ENCODE measurements at regions of chr6 and their contacts with region 1.

Region 1: DNA sequence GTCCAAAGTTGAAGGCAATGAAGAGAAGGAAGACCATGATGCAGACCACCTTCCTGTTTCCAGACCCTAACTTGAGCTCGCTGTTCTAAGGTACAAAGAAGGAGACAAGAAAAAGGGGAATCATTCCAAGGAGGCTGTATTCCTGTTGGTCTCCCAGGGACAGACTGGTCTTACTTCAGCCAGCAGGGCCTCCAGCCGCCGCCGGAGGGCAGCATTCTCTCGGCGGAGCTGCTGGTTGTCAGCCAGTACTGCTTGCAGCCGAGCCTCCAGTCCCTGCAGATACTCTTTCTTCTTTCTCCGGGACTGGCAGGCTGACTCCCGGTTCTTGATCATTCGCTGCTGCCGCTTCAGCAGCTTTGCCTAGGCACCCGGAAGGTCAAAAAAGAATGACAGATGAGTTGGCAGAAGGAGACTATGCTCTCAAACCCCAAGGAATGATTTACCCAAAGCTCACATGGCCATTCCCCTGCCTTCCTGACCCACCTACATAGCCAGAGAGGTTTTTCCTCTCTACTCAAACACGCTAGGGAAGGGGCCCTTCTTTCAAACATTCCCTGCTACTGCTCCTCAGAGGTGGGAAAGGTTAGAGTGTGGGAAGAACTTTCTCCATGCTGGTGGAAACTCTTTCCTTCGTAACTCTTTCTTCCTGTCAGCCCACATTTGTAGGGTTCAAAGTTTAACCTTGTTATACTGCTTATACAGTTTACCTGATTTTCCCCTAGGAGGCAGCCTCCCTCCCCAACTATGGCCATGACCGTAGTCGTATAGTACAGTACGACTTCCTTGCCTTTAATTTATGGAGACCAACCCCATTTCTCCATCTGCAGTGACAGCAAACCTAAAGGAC is 9.0 kb downstream of the ATF6B start:
- DNase-seq: peak; percentile 44 to 83 (median 64)
- ATAC-seq: peak; percentile 82
- H3K4me3 ChIP-seq: no peak overlapping the region
- H3K4me3 Mint-ChIP-seq: no peak overlapping the region
- H3K27ac ChIP-seq: no peak overlapping the region
- H3K27ac Mint-ChIP-seq: no peak overlapping the region
- H3K4me1 ChIP-seq: peaks cover 10% of the 10 kb centered on the region
- H3K4me1 Mint-ChIP-seq: peaks cover 13% of the 10 kb centered on the region
- H3K27me3 ChIP-seq: no peaks in the 10 kb centered on the region
- H3K27me3 Mint-ChIP-seq: no peaks in the 10 kb centered on the region
- CTCF ChIP-seq: peak; percentile 81

Region 2: GRCh38 chr6:32153564-32154513 is 34.8 kb after region 1 on chr6 and contains the start of gene PPT2:
- CTCF ChIA-PET with region 1: interaction called, 9 read pairs
- POLR2A ChIA-PET with region 1: no interaction called
- intact Hi-C with region 1: loop called (anchors 1 to 2 kb)
- DNase-seq: peak; percentile 38 to 88 (median 64)
- ATAC-seq: peak; percentile 67
- H3K4me3 ChIP-seq: peak within 1 kb of the TSS; percentile 80
- H3K4me3 Mint-ChIP-seq: peak within 1 kb of the TSS; percentile 96
- H3K27ac ChIP-seq: peak within 1 kb of the TSS; percentile 51 to 67
- H3K27ac Mint-ChIP-seq: peak within 1 kb of the TSS; percentile 88
- H3K4me1 ChIP-seq: peaks cover 57% of the 10 kb centered on the region
- H3K4me1 Mint-ChIP-seq: peaks cover 65% of the 10 kb centered on the region
- H3K27me3 ChIP-seq: peaks cover 4 to 14% of the 10 kb centered on the region in 2 experiments
- H3K27me3 Mint-ChIP-seq: peaks cover 22% of the 10 kb centered on the region
- CTCF ChIP-seq: no peak
- total RNA-seq, gene PPT2: 8.7 to 8.9 TPM

Region 3: DNA sequence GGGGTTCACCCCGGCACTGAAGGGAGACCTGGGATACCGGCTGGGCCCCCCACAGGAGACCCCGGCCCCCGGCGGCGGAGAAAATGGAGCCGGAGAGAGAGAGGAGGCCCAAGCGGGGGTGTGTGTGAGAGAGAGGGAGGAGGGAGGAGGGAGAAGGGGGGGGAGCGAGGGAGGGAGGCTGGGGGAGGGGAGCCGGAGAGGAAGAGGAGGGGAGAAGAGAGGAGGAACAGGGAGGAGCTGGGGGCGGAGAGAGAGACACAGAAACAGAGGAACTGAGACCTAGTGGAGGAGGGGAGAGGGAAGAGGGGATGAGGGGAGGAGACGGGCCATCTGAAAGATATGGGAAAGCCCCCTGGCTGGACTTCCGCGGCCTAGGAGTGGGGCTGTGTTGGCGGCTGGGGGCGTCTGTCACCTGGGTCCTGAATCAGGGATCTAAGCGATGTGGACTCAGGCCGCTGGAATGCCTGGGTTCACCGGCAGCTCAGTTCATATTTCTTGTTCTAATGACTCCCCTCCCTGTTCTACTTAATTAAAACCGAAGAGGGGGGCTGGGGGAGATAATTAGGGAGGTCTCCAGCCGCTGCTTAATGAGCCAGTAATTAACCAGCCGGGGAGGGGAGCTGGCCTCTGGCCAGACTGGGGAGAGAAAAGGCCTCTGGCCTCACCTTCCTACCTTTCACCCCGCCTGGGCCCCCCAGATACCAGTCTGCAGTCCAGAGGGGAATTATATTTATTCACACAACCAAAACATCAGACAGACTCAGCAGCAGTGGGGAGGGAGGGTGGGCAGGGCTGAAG is 71.2 kb after region 1 on chr6 and contains the start of gene PBX2:
- CTCF ChIA-PET with region 1: interaction called, 7 read pairs
- POLR2A ChIA-PET with region 1: interaction called, 7 read pairs
- intact Hi-C with region 1: loop called (anchors 2 kb)
- DNase-seq: peak; percentile 65 to 96 (median 86)
- ATAC-seq: peak; percentile 51
- H3K4me3 ChIP-seq: peak within 1 kb of the TSS; percentile 96
- H3K4me3 Mint-ChIP-seq: peak within 1 kb of the TSS; percentile 99
- H3K27ac ChIP-seq: peak within 1 kb of the TSS; percentile 93
- H3K27ac Mint-ChIP-seq: peak within 1 kb of the TSS; percentile 96
- H3K4me1 ChIP-seq: peaks cover 74% of the 10 kb centered on the region
- H3K4me1 Mint-ChIP-seq: peaks cover 71% of the 10 kb centered on the region
- H3K27me3 ChIP-seq: no peaks in the 10 kb centered on the region
- H3K27me3 Mint-ChIP-seq: no peaks in the 10 kb centered on the region
- CTCF ChIP-seq: no peak
- total RNA-seq, gene PBX2: 62.0 to 65.6 TPM

Region 4: DNA sequence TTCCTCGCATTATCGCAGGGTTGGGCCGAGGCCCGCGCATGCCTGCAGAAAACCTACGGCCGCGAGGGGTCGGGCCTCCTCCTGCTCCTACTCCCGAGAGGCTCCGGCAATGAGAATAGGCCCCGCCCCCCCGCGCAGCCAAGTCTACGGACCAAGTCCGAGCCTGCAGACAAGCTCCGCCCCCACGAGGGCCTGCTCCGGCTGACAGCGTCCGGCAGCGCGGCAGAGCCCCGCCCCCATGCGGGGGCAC is 76.6 kb after region 1 on chr6:
- CTCF ChIA-PET with region 1: interaction called, 7 read pairs
- POLR2A ChIA-PET with region 1: interaction called, 7 read pairs
- intact Hi-C with region 1: loop called (anchors 2 kb)
- DNase-seq: peak in 13 of 14 experiments; percentile 97 to 100 (median 100)
- ATAC-seq: peak; percentile 82
- H3K4me3 ChIP-seq: peak overlapping the region; percentile 100
- H3K4me3 Mint-ChIP-seq: peak overlapping the region; percentile 99
- H3K27ac ChIP-seq: peak overlapping the region; percentile 87 to 100
- H3K27ac Mint-ChIP-seq: peak overlapping the region; percentile 96
- H3K4me1 ChIP-seq: peaks cover 52% of the 10 kb centered on the region
- H3K4me1 Mint-ChIP-seq: peaks cover 48% of the 10 kb centered on the region
- H3K27me3 ChIP-seq: no peaks in the 10 kb centered on the region
- H3K27me3 Mint-ChIP-seq: no peaks in the 10 kb centered on the region
- CTCF ChIP-seq: peak; percentile 31

Region 5: GRCh38 chr6:32700391-32701040 is 581.5 kb after region 1 on chr6:
- CTCF ChIA-PET with region 1: no interaction called
- POLR2A ChIA-PET with region 1: no interaction called
- intact Hi-C with region 1: no loop called
- DNase-seq: peak in 10 of 14 experiments; percentile 0 to 73 (median 10)
- ATAC-seq: peak; percentile 41
- H3K4me3 ChIP-seq: no peak overlapping the region
- H3K4me3 Mint-ChIP-seq: no peak overlapping the region
- H3K27ac ChIP-seq: no peak overlapping the region
- H3K27ac Mint-ChIP-seq: no peak overlapping the region
- H3K4me1 ChIP-seq: peaks cover 3% of the 10 kb centered on the region
- H3K4me1 Mint-ChIP-seq: no peaks in the 10 kb centered on the region
- H3K27me3 ChIP-seq: peaks cover 4 to 12% of the 10 kb centered on the region in 2 experiments
- H3K27me3 Mint-ChIP-seq: peaks cover 50% of the 10 kb centered on the region
- CTCF ChIP-seq: peak; percentile 93